ENCODE measurements at regions of chr19 and their contacts with region 1.

Region 1: DNA sequence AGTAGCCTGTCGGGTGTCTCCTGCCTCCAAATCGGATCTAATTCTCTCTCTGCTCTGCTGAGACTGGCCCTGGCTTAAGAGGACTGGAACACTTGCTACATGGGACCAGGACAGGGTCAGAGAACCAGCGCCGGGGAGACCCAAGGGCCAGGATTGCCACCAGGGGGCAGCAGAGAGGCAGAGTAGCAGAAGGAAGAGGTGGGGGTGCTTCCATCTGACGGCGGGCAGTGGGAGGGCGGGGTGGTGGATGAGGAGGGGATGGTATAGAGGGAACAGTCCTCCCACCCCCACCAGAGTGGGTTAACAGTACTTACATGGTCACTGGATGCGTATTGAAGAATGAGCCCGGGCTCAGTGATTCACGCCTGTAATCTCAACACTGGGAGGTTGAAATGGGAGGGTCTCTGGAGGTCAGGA is 11.9 kb downstream of the SELENOW start:
- DNase-seq: peak; percentile 62 to 82
- H3K4me3 ChIP-seq: peak overlapping the region; percentile 42; the same call in 1 of the 2 replicates
- H3K27ac ChIP-seq: peak overlapping the region; percentile 65
- H3K4me1 ChIP-seq: peaks cover 10% of the 10 kb centered on the region
- H3K27me3 ChIP-seq: no peaks in the 10 kb centered on the region
- CTCF ChIP-seq: peak; percentile 99

Region 2: GRCh38 chr19:47523473-47523872 is 266.9 kb before region 1 on chr19:
- CTCF ChIA-PET with region 1: no interaction called
- POLR2A ChIA-PET with region 1: interaction called, 14 read pairs
- intact Hi-C with region 1: no loop called
- DNase-seq: no peak
- H3K4me3 ChIP-seq: no peak overlapping the region
- H3K27ac ChIP-seq: no peak overlapping the region
- H3K4me1 ChIP-seq: 0 out of 2 replicates have a peak, but pooled peaks cover 4% of the 10 kb centered on the region
- H3K27me3 ChIP-seq: no peaks in the 10 kb centered on the region
- CTCF ChIP-seq: no peak

Region 3: DNA sequence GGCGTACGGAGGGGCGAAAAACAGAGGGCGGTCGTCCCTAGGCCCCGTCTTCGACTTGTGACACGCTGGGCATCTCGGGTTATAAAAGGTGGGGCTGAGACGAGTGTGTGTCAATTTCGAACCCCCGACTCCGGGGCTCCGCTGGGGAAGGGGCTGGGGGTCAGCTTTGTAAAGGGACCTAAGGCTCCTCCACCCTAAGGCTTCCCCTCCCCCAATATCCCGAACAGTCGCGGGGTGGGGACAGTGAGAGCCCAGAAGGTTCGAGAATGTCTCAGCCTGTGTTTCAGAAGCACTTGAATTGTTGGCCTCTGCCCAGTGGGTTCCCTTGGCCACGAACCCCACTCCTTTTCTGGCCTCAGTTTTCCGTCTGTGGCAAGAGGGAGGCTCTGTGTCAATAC is 11.5 kb before region 1 on chr19:
- CTCF ChIA-PET with region 1: interaction called, 16 read pairs
- POLR2A ChIA-PET with region 1: interaction called, 3 read pairs
- intact Hi-C with region 1: loop called (anchors 1 kb)
- DNase-seq: no peak
- H3K4me3 ChIP-seq: peak overlapping the region; percentile 95
- H3K27ac ChIP-seq: 0 out of 2 replicates have a peak overlapping the region, but pooled peaks have one; percentile 84
- H3K4me1 ChIP-seq: peaks cover 24% of the 10 kb centered on the region
- H3K27me3 ChIP-seq: no peaks in the 10 kb centered on the region
- CTCF ChIP-seq: no peak

Region 4: DNA sequence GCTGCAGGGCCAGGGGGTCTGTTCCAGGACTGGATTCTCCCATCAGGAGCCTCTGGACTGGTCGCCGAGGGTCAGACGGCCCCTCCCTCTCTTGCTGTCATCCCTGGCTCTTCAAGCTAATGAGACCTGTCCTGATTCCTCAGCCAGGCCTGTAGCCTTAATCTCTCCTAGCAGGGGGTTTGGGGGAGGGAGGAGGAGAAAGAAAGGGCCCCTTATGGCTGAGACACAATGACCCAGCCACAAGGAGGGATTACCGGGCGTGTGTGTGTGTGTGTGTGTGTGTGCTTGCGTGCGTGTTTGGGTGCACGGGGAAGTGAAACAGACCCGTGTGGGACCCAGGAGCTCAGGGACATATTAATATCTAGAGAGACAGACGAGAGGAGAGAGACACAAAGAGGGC is 29.5 kb after region 1 on chr19:
- CTCF ChIA-PET with region 1: no interaction called
- POLR2A ChIA-PET with region 1: no interaction called
- intact Hi-C with region 1: no loop called
- DNase-seq: no peak
- H3K4me3 ChIP-seq: no peak overlapping the region
- H3K27ac ChIP-seq: no peak overlapping the region
- H3K4me1 ChIP-seq: no peaks in the 10 kb centered on the region
- H3K27me3 ChIP-seq: peaks cover 71% of the 10 kb centered on the region
- CTCF ChIP-seq: no peak

Region 5: DNA sequence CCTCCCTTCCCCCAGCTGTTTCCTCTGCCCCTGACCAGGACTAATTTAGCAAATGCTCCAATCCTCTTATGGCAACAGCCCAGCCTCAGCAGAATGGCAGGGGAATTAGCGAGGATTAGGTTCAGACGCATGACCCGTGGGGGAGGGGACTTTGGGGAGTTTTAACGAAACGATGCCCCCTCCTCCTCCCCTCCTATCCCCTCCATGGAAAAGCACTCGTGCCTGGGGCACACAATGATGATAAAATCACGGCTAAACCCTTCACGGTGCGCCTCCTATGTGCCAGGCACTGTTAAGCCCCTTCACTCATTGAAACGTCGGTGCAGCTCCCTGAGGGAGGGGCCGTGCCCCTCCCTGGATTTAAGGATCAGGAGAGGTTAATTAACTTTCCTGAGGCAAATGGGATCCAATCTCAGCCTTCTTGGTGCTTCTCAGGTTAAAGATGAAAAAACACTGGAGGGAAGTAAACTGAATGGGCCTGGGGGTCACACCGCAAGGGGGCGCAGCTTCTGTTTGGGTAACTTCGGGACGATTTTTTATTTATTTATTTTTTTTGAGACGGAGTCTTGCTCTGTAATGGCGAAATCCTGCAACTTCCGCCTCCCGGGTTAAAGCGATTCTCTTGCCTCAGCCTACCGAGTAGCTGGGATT is 58.5 kb after region 1 on chr19:
- CTCF ChIA-PET with region 1: interaction called, 11 read pairs
- POLR2A ChIA-PET with region 1: no interaction called
- intact Hi-C with region 1: no loop called
- DNase-seq: peak in 1 of 2 experiments; percentile 23
- H3K4me3 ChIP-seq: no peak overlapping the region; the same call in 1 of the 2 replicates
- H3K27ac ChIP-seq: no peak overlapping the region
- H3K4me1 ChIP-seq: peaks cover 13% of the 10 kb centered on the region; the same call in 1 of the 2 replicates
- H3K27me3 ChIP-seq: peaks cover 48% of the 10 kb centered on the region
- CTCF ChIP-seq: peak; percentile 73

Region 6: GRCh38 chr19:47863514-47863936 is 73.1 kb after region 1 on chr19:
- CTCF ChIA-PET with region 1: interaction called, 8 read pairs
- POLR2A ChIA-PET with region 1: no interaction called
- intact Hi-C with region 1: loop called (anchors 10 kb)
- DNase-seq: peak; percentile 56 to 87
- H3K4me3 ChIP-seq: no peak overlapping the region
- H3K27ac ChIP-seq: no peak overlapping the region
- H3K4me1 ChIP-seq: no peaks in the 10 kb centered on the region
- H3K27me3 ChIP-seq: peaks cover 47% of the 10 kb centered on the region
- CTCF ChIP-seq: peak; percentile 99

Measured in PC-9 (cell line).